ENCODE measurements at regions of chr6 and their contacts with region 1.

Region 1: GRCh38 chr6:41638002-41638934 is at the start of gene MDFI:
- DNase-seq: peak; percentile 41
- H3K4me3 ChIP-seq: peak within 1 kb of the TSS; percentile 27 to 66 (median 55)
- H3K27ac ChIP-seq: peak within 1 kb of the TSS; percentile 30
- H3K4me1 ChIP-seq: peaks cover 32% of the 10 kb centered on the region
- H3K27me3 ChIP-seq: no peaks in the 10 kb centered on the region
- CTCF ChIP-seq: no peak
- POLR2A ChIP-seq: no peak
- total RNA-seq, gene MDFI: 32.4 and 45.8 TPM in 2 replicates

Region 2: DNA sequence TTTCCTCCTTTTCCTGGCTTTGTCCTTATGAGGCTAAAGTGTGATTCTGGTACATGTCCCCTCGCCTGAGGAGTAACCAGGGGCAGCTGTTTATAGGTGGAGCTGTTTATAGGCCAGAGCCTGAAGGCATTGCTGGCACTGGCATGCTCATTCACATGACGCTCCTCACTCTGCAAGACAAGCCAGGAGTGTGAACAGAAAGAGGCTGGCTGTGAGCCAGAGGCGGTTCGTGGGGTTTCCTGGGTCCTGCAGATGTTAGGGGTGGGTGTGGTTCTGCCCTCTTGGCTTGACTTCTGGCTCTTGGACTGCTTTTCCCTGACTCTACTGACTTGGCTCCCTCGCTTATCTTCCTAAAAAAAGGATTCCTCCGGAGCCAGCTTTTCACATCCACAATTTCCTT is 12.8 kb before region 1 on chr6:
- CTCF ChIA-PET with region 1: interaction called, 5 read pairs
- POLR2A ChIA-PET with region 1: no interaction called
- dilution Hi-C with region 1: no loop called
- intact Hi-C with region 1: loop called (anchors 1 kb)
- DNase-seq: no peak
- H3K4me3 ChIP-seq: no peak overlapping the region
- H3K27ac ChIP-seq: no peak overlapping the region
- H3K4me1 ChIP-seq: peaks cover 25% of the 10 kb centered on the region
- H3K27me3 ChIP-seq: peaks cover 0 to under 1% of the 10 kb centered on the region in 2 experiments
- CTCF ChIP-seq: no peak
- POLR2A ChIP-seq: no peak

Region 3: DNA sequence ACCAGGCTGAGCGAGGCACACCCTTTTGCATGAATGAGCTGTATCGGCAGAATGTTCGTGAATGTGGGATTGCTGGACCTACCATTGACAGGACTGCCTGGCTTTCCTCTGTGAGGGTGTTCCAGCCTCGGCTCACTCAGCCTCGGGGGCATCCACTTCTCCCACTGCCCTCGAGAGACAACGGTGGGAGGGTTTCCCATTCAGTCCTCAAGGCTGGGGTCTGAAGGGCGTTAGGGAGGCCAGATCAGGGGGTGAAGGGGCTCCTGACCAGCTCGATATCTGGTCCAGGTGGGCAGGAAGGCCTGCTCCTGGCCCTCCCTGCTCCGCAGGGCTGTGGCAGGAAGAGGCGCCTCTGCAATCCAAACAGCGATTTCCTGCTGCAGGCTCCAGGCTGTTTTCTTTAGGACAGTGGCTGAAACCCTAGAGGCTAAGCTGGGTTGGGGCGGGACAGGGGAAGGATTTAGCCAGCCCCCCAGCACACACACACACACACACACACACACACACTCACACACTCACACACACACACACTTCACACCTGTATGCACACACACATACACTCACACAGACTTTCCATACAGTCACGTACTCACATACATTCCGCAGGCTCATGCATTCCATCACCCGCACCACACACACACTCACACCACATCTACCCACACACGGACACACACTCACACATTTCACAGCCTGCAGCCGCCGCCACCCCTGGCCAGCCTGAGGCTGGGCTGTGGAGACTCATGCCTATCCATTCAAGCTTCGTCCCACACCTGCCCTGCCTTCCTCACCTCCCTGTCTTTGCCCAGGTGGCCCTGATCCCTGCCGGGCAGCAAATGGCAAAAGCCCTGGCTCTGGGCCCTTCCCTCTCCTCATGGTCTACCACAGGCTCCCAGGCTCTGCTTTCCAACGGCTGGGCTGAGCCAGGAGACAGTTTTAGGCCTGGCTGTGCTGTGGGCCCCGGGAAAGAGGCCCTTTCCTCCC is 17.7 kb after region 1 on chr6:
- CTCF ChIA-PET with region 1: interaction called, 4 read pairs
- POLR2A ChIA-PET with region 1: no interaction called
- dilution Hi-C with region 1: no loop called
- intact Hi-C with region 1: loop called (anchors 2 kb)
- DNase-seq: peak; percentile 73
- H3K4me3 ChIP-seq: no peak overlapping the region
- H3K27ac ChIP-seq: peak overlapping the region; percentile 11
- H3K4me1 ChIP-seq: peaks cover 17% of the 10 kb centered on the region
- H3K27me3 ChIP-seq: no peaks in the 10 kb centered on the region
- CTCF ChIP-seq: no peak
- POLR2A ChIP-seq: peak; percentile 67